ENCODE measurements at regions of chr1 and their contacts with region 1.

Region 1: DNA sequence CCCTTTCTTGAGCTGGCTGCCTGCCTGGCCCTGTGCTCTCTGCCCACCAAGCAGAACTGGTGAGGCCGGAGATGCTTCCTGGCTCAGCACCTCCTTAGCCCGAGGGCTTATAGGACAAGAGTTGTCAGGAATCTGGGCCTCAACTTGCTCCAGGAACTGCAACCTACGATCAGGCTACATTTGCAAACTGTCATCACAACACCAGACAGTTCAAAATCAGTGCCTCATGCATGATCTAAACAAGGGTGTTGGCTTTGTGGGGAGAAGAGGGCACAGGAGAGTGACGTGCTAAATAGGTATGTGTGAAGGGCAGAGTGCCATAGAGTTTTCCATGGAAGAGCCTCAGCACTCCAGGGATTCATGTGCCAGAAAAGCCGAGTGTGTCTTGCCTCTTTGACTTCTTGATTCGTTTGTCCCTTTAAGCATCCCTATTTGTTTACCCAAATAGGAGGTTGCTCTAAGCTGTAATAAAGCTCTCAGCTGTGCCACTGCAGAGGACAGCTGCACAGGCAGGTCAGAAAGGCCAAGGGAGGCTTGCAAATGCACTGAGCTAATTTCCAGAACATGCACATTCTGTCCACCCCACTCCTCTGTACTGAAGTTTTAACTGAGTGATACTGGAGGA is 30.2 kb upstream of the NEK2 start:
- DNase-seq: peak; percentile 58 to 85
- H3K4me3 ChIP-seq: no peak overlapping the region
- H3K27ac ChIP-seq: peak overlapping the region; percentile 18; the same call in 1 of the 2 replicates
- H3K4me1 ChIP-seq: peaks cover 26% of the 10 kb centered on the region
- H3K27me3 ChIP-seq: no peaks in the 10 kb centered on the region
- CTCF ChIP-seq: no peak

Region 2: GRCh38 chr1:211613093-211613947 is 92.3 kb before region 1 on chr1:
- CTCF ChIA-PET with region 1: no interaction called
- POLR2A ChIA-PET with region 1: no interaction called
- intact Hi-C with region 1: no loop called
- DNase-seq: peak; percentile 79 to 84
- H3K4me3 ChIP-seq: no peak overlapping the region
- H3K27ac ChIP-seq: peak overlapping the region; percentile 71
- H3K4me1 ChIP-seq: peaks cover 23% of the 10 kb centered on the region
- H3K27me3 ChIP-seq: no peaks in the 10 kb centered on the region
- CTCF ChIP-seq: no peak

Region 3: GRCh38 chr1:211735208-211736170 is 29.9 kb after region 1 on chr1:
- CTCF ChIA-PET with region 1: no interaction called
- POLR2A ChIA-PET with region 1: no interaction called
- intact Hi-C with region 1: loop called (anchors 1 kb)
- DNase-seq: peak; percentile 89 to 95
- H3K4me3 ChIP-seq: peak overlapping the region; percentile 24; the same call in 1 of the 2 replicates
- H3K27ac ChIP-seq: peak overlapping the region; percentile 72
- H3K4me1 ChIP-seq: peaks cover 45% of the 10 kb centered on the region
- H3K27me3 ChIP-seq: no peaks in the 10 kb centered on the region
- CTCF ChIP-seq: no peak

Region 4: GRCh38 chr1:211775170-211775569 is 69.6 kb after region 1 on chr1:
- CTCF ChIA-PET with region 1: no interaction called
- POLR2A ChIA-PET with region 1: no interaction called
- intact Hi-C with region 1: loop called (anchors 10 kb)
- DNase-seq: no peak
- H3K4me3 ChIP-seq: no peak overlapping the region
- H3K27ac ChIP-seq: no peak overlapping the region
- H3K4me1 ChIP-seq: no peaks in the 10 kb centered on the region
- H3K27me3 ChIP-seq: no peaks in the 10 kb centered on the region
- CTCF ChIP-seq: no peak